Dorsolateral prefrontal cortex (tissue), 120 donors: ENCODE measurements at regions of chr21 and their contacts with region 1.

Region 1: GRCh38 chr21:37366482-37367316 is at the start of gene DYRK1A:
- DNase-seq: peak; percentile 95 to 99 (median 98)
- H3K4me3 ChIP-seq: peak within 1 kb of the TSS; percentile 77 to 99 (median 92)
- H3K27ac ChIP-seq: peak within 1 kb of the TSS; percentile 96 to 100 (median 100)
- H3K27me3 ChIP-seq: no peaks in the 10 kb centered on the region
- CTCF ChIP-seq: peak in 5 of 56 donors; percentile 11 to 26 (median 17)
- total RNA-seq, gene DYRK1A: 72.3 to 147 (median 97.5) TPM

Region 2: DNA sequence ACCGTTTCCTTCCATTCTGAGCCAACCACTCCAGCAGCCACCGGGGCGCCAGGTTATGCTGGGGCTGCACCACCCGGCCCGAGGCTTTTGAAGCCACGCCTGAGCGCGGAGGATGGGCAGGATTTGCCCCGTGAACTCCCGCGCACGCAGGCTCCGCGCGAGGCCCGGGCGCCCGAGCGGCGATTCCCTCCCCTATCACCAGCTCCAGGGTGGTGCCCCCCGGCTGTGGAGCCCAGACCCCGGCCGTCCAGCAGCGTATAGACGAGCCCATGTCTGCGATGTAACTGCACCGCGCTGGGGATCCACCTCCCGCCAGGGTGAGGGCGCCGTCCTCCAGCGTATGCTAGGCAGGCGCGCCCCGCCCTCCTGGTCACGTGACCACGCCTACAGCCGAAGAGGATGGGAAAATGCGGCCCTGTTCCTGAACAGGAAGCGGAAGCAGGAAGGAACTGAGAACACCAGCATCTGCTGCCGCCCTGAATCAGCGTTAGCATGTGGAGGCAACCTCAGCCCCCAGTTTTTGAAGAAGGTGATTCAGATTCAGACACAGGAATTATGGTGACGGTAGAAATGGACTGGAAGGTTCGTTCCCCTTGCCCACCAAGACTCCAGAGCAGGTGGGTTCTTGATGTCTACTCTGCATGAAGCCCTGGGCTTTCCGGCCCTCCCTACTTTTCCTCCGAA is 145.6 kb before region 1 on chr21:
- intact Hi-C with region 1: loop called (anchors 5 kb)
- DNase-seq: peak; percentile 91 to 97 (median 96)
- H3K4me3 ChIP-seq: peak overlapping the region; percentile 39 to 96 (median 79)
- H3K27ac ChIP-seq: peak overlapping the region; percentile 2 to 93 (median 82)
- H3K27me3 ChIP-seq: no peaks in the 10 kb centered on the region
- CTCF ChIP-seq: peak; percentile 52 to 92 (median 74)

Region 3: GRCh38 chr21:37267269-37268184 is 99.2 kb before region 1 on chr21 and contains the start of gene VPS26C:
- intact Hi-C with region 1: loop called (anchors 1 kb)
- DNase-seq: peak; percentile 94 to 99 (median 98)
- H3K4me3 ChIP-seq: peak within 1 kb of the TSS; percentile 62 to 99 (median 92)
- H3K27ac ChIP-seq: peak within 1 kb of the TSS; percentile 89 to 100 (median 98)
- H3K27me3 ChIP-seq: no peaks in the 10 kb centered on the region
- CTCF ChIP-seq: peak in 20 of 56 donors; percentile 5 to 38 (median 18)
- total RNA-seq, gene VPS26C: 32.9 to 58.9 (median 44.4) TPM

Region 4: GRCh38 chr21:37407719-37408420 is 41.2 kb after region 1 on chr21:
- intact Hi-C with region 1: loop called in 1 of 2 experiments (anchors 5 kb)
- DNase-seq: no peak
- H3K4me3 ChIP-seq: no peak overlapping the region
- H3K27ac ChIP-seq: peak overlapping the region in 1 of 59 donors; percentile 5
- H3K27me3 ChIP-seq: no peaks in the 10 kb centered on the region
- CTCF ChIP-seq: no peak

Region 5: GRCh38 chr21:37463083-37463801 is 96.5 kb after region 1 on chr21:
- intact Hi-C with region 1: loop called (anchors 5 kb)
- DNase-seq: no peak
- H3K4me3 ChIP-seq: peak overlapping the region in 19 of 59 donors; percentile 2 to 46 (median 22)
- H3K27ac ChIP-seq: peak overlapping the region in 3 of 59 donors; percentile 6 to 50 (median 8)
- H3K27me3 ChIP-seq: no peaks in the 10 kb centered on the region
- CTCF ChIP-seq: peak in 53 of 56 donors; percentile 18 to 67 (median 48)